ENCODE measurements at regions of chr15 and their contacts with region 1.

Region 1: DNA sequence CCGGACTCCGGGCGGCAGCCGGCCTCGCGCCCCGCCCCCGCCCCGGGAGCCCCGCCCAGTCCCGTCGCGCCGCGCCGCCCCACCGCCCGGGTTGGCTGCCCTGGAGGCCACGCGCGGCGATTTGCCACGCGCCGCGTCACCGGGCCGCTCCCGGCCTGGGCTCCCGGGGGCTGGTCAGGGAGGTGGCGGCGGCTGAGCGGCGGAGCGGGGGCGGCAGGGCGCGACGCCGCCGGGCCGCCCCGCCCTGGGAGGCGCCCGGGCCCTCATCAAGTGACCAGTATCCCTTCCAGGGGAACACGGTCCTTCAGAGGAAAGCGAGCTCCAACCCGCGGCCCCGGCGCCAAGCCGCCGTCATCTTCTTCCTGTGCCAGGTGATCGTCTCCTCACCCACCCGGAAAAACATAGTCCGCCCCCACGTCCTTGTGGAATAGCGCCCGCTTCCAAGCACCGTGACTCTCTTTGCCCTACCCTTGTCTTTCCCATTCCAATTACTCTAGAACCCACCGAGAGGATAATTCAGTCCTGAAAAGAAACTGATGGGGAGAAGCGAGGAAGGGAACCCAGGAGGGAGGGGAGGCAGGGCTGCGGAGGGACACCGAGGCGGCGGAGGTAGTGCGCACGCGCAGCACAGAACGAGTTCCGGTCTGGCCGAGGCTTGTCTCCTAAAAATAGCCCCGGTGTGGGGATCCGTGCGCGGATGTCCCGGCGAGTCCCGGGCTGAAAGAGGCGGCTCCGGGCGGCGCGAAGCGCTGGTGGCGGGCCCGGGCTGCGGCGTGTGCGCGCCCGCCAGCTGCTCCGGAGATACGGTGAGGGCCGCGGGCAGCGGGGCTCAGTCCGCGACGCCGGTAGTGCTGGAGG is at the start of gene MEF2A:
- DNase-seq: peak; percentile 80 to 95
- H3K4me3 ChIP-seq: peak within 1 kb of the TSS; percentile 82 to 94
- H3K27ac ChIP-seq: peak within 1 kb of the TSS; percentile 98 to 100
- H3K4me1 ChIP-seq: peaks cover 2 to 26% of the 10 kb centered on the region in 2 donors
- H3K27me3 ChIP-seq: no peaks in the 10 kb centered on the region
- CTCF ChIP-seq: no peak
- total RNA-seq, gene MEF2A: 99.4 TPM

Region 2: GRCh38 chr15:99282121-99282520 is 283.4 kb before region 1 on chr15:
- intact Hi-C with region 1: loop called (anchors 5 kb)
- DNase-seq: no peak
- H3K4me3 ChIP-seq: no peak overlapping the region
- H3K27ac ChIP-seq: no peak overlapping the region
- H3K4me1 ChIP-seq: peaks cover 0 to 7% of the 10 kb centered on the region in 2 donors
- H3K27me3 ChIP-seq: no peaks in the 10 kb centered on the region
- CTCF ChIP-seq: no peak

Region 3: GRCh38 chr15:99424978-99425656 is 140.4 kb before region 1 on chr15:
- intact Hi-C with region 1: loop called (anchors 5 kb)
- DNase-seq: peak; percentile 37 to 88
- H3K4me3 ChIP-seq: peak overlapping the region in 1 of 2 donors; percentile 21
- H3K27ac ChIP-seq: peak overlapping the region; percentile 88 to 89
- H3K4me1 ChIP-seq: peaks cover 11 to 16% of the 10 kb centered on the region in 2 donors
- H3K27me3 ChIP-seq: no peaks in the 10 kb centered on the region
- CTCF ChIP-seq: no peak

Region 4: DNA sequence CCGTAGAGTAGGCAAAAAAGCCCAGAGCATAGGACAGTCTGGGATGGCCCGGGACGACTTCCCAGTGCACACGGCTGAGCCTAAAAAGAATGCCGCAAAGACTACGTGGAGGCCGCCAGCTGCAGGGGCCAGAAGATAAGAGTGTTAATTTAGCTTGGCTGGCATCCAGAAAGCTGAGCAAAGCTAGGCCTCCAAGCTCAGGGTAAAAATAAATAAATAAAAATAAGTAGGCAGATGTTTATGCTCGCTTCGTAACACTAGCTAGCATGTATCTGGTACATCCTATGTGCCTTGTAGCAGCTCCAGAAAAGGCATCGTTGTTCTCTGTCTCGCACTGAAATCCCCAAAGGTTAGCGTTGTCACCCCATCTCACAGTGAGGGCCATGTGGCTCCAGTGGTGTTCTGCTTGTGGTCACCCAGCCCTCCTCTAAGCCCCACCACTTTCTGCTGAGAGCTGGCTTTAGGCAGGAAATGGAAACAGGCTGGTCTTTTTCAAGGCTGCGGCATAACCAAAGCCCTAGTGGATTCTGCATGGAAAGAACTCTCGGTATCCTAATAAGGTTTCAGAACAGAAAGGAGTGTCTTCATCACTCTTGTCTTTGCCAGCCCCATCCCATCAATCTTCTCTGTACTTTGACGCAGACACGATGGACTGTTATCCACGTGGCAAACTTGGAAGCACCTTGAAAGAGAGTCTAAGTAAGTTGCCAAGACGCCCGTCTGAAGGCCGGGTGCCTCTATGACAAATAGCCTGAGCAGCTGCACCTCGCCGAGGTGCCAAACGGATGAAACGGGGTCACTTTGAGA is 57.8 kb before region 1 on chr15:
- intact Hi-C with region 1: loop called (anchors 2 kb)
- DNase-seq: peak in 1 of 2 donors; percentile 87
- H3K4me3 ChIP-seq: peak overlapping the region; percentile 22 to 50
- H3K27ac ChIP-seq: peak overlapping the region; percentile 82 to 84
- H3K4me1 ChIP-seq: peaks cover 5 to 32% of the 10 kb centered on the region in 2 donors
- H3K27me3 ChIP-seq: no peaks in the 10 kb centered on the region
- CTCF ChIP-seq: no peak

Region 5: DNA sequence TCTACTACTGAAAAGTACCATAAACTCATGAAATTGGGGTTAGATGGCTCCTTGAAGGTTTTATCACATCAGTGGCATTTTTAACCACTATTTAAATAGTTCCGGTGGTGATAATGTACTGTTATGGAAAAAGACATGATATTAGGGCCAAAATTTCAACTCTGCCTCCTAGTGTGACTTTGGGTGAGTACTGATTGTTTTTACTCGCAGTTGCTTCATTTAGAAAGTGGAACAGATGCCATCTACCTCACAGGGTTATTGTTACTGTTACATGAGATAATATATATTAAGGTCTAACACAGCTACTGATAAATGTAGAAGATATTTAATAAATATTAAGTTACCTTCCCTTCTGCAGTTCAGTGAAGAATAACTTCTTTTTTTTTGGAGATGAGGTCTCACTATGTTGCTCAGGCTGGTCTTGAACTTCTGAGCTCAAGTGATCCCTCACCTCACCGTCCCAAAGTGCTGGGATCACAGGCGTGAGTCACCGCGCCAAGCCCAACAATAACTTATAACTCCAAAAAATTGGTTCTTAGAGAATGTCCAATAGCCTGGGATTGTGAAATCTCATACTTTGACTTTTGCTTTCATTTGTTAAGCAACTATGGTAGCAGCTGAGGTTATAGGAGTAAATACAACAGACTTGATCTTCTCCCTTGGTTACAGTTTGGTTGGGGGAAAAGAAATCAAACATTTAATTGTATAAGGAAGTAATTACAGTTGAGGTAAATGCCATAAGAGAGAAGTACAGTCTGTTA is 48.5 kb after region 1 on chr15:
- intact Hi-C with region 1: loop called (anchors 5 kb)
- DNase-seq: no peak
- H3K4me3 ChIP-seq: peak overlapping the region in 1 of 2 donors; percentile 9
- H3K27ac ChIP-seq: peak overlapping the region; percentile 1 to 60
- H3K4me1 ChIP-seq: peaks cover 6 to 23% of the 10 kb centered on the region in 2 donors
- H3K27me3 ChIP-seq: no peaks in the 10 kb centered on the region
- CTCF ChIP-seq: no peak

Region 6: GRCh38 chr15:99721104-99721778 is 155.7 kb after region 1 on chr15:
- intact Hi-C with region 1: no loop called
- DNase-seq: no peak
- H3K4me3 ChIP-seq: no peak overlapping the region
- H3K27ac ChIP-seq: peak overlapping the region in 1 of 2 donors; percentile 55
- H3K4me1 ChIP-seq: peaks cover 2 to 18% of the 10 kb centered on the region in 2 donors
- H3K27me3 ChIP-seq: no peaks in the 10 kb centered on the region
- CTCF ChIP-seq: no peak

Measured in ascending aorta (tissue), 2 donors.